Activated B cell treated with CpG ODN at 0.5 μM for 24 hours (primary cell): ENCODE measurements at regions of chr16 and their contacts with region 1.

Region 1: DNA sequence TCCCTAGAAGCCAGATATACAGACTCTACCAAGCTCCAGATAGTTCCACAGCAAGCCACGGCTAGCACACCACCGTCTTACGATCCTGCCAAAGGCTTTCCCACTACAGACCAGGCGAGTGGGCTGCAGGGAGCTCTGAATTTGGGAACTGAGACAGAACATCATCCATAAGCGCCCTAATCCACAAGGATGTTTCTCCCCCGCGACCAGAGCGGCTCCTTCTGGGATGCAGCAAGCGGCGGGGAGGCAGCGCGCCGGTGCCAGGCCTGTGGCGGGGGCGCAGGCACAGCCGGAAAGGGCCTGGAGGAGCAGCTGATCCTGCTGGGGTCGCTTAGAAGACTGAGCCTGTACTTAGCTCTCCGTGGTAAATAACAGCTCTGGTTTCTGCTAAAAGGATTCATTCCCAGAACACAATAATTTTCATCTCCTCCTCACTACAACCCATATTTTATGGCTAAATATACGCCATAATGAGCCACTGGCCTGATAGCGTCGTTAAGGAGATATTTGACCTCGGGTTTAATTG is 16.2 kb upstream of the FOXF1 start:
- DNase-seq: no peak
- ATAC-seq: no peak
- H3K4me3 Mint-ChIP-seq: no peak overlapping the region
- H3K27ac Mint-ChIP-seq: no peak overlapping the region
- H3K4me1 Mint-ChIP-seq: no peaks in the 10 kb centered on the region
- H3K27me3 Mint-ChIP-seq: peaks cover 68% of the 10 kb centered on the region
- CTCF ChIP-seq: no peak

Region 2: GRCh38 chr16:86044881-86045590 is 449.1 kb before region 1 on chr16:
- CTCF ChIA-PET with region 1: no interaction called
- POLR2A ChIA-PET with region 1: no interaction called
- intact Hi-C with region 1: no loop called
- DNase-seq: no peak
- ATAC-seq: peak; percentile 40
- H3K4me3 Mint-ChIP-seq: no peak overlapping the region
- H3K27ac Mint-ChIP-seq: no peak overlapping the region
- H3K4me1 Mint-ChIP-seq: peaks cover 8% of the 10 kb centered on the region
- H3K27me3 Mint-ChIP-seq: peaks cover 36% of the 10 kb centered on the region
- CTCF ChIP-seq: no peak

Region 3: DNA sequence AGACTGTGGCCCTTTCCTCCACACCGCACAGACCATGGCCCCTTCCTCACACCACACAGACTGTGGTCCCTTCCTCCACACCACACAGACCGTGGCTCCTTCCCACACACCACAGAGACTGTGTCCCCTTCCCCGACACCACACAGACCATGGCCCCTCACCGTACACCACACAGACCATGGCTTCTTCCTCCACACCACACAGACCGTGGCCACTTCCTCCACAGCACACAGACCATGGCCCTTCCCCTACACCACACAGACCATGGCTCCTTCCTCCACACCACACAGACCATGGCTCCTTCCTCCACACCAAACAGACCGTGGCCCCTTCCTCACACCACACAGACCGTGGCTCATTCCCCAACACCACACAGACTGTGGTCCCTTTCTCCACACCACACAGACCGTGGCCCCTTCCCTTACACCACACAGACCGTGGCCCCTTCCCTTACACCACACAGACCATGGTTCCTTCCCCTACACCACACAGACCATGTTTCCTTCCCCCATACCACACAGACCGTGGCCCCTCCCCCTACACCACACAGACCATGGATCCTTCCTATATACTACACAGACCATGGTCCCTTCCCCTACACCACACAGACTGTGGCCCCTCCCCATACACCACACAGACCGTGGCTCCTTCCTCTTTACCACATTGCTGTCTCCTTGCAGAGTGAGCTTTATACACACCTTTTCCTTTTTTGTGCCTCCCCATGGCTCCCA is 281.2 kb before region 1 on chr16:
- CTCF ChIA-PET with region 1: no interaction called
- POLR2A ChIA-PET with region 1: no interaction called
- intact Hi-C with region 1: no loop called
- DNase-seq: no peak
- ATAC-seq: peak; percentile 79
- H3K4me3 Mint-ChIP-seq: peak overlapping the region; percentile 13
- H3K27ac Mint-ChIP-seq: peak overlapping the region; percentile 70
- H3K4me1 Mint-ChIP-seq: peaks cover 33% of the 10 kb centered on the region
- H3K27me3 Mint-ChIP-seq: peaks cover 2% of the 10 kb centered on the region
- CTCF ChIP-seq: no peak

Region 4: DNA sequence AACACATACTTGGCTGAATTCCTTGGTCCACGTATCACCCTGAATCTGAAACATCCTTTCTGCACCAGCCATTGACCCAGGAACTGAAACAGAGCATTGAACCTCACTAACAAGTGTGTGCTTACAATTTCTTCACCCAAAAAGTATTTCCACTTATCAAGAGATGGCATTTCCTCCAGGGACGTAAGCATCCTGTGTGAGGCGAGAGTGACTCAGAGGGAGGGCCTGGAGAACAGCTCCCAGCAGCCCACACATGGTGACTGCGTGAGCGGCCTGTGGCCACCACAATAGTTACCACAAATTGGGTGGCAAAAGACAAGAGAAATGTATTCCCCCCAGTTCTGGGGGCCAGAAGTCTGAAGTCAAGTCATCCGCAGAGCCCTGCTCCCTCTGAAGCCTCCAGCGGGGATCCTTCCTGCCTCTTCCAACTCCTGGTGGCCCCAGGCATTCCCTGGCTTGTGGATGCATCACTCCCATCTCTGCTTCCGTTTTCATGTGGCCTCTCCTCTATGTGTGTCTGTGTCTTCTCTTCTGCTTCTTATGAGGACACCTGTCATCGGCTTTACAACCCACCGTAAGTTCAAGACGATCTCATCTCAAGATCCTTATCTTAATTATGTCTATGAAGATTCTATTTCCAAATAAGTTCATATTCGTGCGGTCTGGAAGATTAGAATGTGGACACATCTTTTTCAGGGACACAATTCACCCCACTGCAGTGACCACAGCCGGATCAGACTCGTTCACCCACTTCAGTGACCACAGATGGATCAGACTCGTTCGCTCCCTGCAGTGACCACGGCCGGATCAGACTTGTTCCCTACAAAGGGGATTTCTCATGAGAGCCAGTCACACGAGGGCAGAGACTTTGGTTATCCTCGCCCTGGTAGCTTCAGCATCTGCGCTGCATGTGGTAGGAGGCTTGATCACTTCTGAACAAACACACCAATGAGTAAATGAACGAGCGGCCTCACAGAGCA is 106.4 kb before region 1 on chr16:
- CTCF ChIA-PET with region 1: no interaction called
- POLR2A ChIA-PET with region 1: no interaction called
- intact Hi-C with region 1: no loop called
- DNase-seq: no peak
- ATAC-seq: no peak
- H3K4me3 Mint-ChIP-seq: no peak overlapping the region
- H3K27ac Mint-ChIP-seq: no peak overlapping the region
- H3K4me1 Mint-ChIP-seq: no peaks in the 10 kb centered on the region
- H3K27me3 Mint-ChIP-seq: peaks cover 11% of the 10 kb centered on the region
- CTCF ChIP-seq: no peak

Region 5: DNA sequence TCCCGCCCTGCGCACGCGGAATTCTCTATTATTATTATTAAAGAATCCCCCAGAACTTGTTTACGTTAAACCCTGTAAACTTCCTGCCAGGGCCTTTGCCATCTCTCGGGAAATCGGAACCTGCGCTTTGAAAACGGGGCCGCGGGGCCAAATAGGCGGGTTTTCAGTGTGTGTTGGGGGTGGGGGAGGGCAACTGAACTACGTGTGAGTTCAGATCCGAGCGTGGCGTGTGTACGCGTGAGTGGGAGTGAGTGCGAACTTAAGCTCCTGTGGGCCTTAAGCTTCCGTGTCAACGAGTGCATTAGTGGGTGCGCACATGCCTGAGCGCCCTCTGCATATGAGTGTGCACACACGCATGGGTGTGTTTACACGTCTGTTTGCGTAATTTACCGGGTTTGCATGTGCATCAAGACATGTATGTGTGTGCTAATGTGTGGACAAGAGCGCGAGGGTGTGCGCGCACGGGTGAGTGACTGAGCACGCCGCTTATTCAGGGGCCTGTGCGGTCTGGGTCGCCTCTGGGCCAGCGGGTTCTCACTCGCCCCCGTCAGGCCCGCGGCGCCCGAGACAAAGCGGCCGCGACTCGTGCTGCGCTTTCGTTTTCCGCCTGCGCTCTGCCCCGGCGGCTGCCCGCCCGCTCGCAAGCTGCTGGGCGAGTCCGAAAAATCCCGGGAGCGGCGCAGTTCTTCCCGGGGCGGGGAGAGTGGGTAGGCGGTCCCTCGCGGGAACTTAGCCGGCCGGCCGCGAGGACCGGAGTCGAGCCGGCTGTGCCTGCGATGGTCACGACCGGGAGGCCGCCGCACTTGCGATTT is 15.1 kb after region 1 on chr16:
- CTCF ChIA-PET with region 1: no interaction called
- POLR2A ChIA-PET with region 1: no interaction called
- intact Hi-C with region 1: loop called (anchors 2 kb)
- DNase-seq: peak; percentile 46
- ATAC-seq: peak; percentile 57
- H3K4me3 Mint-ChIP-seq: peak overlapping the region; percentile 82
- H3K27ac Mint-ChIP-seq: peak overlapping the region; percentile 41
- H3K4me1 Mint-ChIP-seq: peaks cover 29% of the 10 kb centered on the region
- H3K27me3 Mint-ChIP-seq: peaks cover 57% of the 10 kb centered on the region
- CTCF ChIP-seq: no peak

Region 6: GRCh38 chr16:87190288-87191230 is 696.5 kb after region 1 on chr16:
- CTCF ChIA-PET with region 1: no interaction called
- POLR2A ChIA-PET with region 1: no interaction called
- intact Hi-C with region 1: no loop called
- DNase-seq: no peak
- ATAC-seq: no peak
- H3K4me3 Mint-ChIP-seq: no peak overlapping the region
- H3K27ac Mint-ChIP-seq: no peak overlapping the region
- H3K4me1 Mint-ChIP-seq: no peaks in the 10 kb centered on the region
- H3K27me3 Mint-ChIP-seq: no peaks in the 10 kb centered on the region
- CTCF ChIP-seq: no peak